HCT116 (cell line): ENCODE measurements at regions of chr1 and their contacts with region 1.

Region 1: GRCh38 chr1:84944767-84945486 is 51.9 kb upstream of the LPAR3 start:
- DNase-seq: peak; percentile 90
- ATAC-seq: peak; percentile 96
- H3K4me3 ChIP-seq: 0 out of 4 replicates have a peak overlapping the region, but pooled peaks of 1 of the 2 experiments have one; percentile 5
- H3K27ac ChIP-seq: peak overlapping the region; percentile 65; the same call in 1 of the 2 replicates
- H3K4me1 ChIP-seq: peaks cover 16 to 25% of the 10 kb centered on the region in 2 experiments
- H3K27me3 ChIP-seq: no peaks in the 10 kb centered on the region
- CTCF ChIP-seq: peak; percentile 70 to 99 (median 91)
- POLR2A ChIP-seq: no peak
- RAD21 ChIP-seq: peak; percentile 87

Region 2: DNA sequence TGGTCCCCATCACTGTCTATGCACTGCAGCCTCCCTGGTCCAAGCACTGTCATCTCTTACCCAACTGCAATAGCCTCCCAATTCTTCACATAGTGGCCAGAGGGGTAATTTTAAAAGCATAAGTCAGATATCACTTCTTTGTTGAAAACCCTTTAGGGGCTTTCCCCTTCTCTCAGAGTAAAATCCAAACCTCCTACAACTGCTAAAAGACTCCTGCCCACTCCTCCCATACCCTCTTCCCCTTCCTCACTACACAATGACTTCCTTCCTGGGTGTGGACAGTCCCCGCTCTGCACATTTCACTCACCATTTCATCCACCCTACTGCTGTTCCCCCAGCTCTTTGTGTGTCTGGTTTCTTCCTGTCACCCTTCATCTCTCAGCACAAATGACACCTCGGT is 43.7 kb after region 1 on chr1:
- CTCF ChIA-PET with region 1: no interaction called
- POLR2A ChIA-PET with region 1: no interaction called
- RAD21 ChIA-PET with region 1: no interaction called
- intact Hi-C with region 1: no loop called
- DNase-seq: no peak
- ATAC-seq: no peak
- H3K4me3 ChIP-seq: no peak overlapping the region
- H3K27ac ChIP-seq: no peak overlapping the region
- H3K4me1 ChIP-seq: no peaks in the 10 kb centered on the region
- H3K27me3 ChIP-seq: no peaks in the 10 kb centered on the region
- CTCF ChIP-seq: no peak
- POLR2A ChIP-seq: no peak
- RAD21 ChIP-seq: no peak

Region 3: GRCh38 chr1:85027242-85027983 is 82.5 kb after region 1 on chr1:
- CTCF ChIA-PET with region 1: interaction called, 29 read pairs
- POLR2A ChIA-PET with region 1: interaction called, 3 read pairs
- RAD21 ChIA-PET with region 1: interaction called, 3 to 5 read pairs
- intact Hi-C with region 1: loop called (anchors 1 kb)
- DNase-seq: no peak
- ATAC-seq: no peak
- H3K4me3 ChIP-seq: no peak overlapping the region
- H3K27ac ChIP-seq: no peak overlapping the region
- H3K4me1 ChIP-seq: no peaks in the 10 kb centered on the region
- H3K27me3 ChIP-seq: no peaks in the 10 kb centered on the region
- CTCF ChIP-seq: peak in 1 of 3 experiments; percentile 15; a peak in 1 of 6 replicates
- POLR2A ChIP-seq: no peak
- RAD21 ChIP-seq: peak; percentile 36

Region 4: GRCh38 chr1:85230305-85230980 is 285.5 kb after region 1 on chr1:
- CTCF ChIA-PET with region 1: interaction called, 29 read pairs
- POLR2A ChIA-PET with region 1: no interaction called
- RAD21 ChIA-PET with region 1: interaction called, 3 to 6 read pairs
- intact Hi-C with region 1: no loop called
- DNase-seq: peak; percentile 29
- ATAC-seq: peak; percentile 76
- H3K4me3 ChIP-seq: no peak overlapping the region
- H3K27ac ChIP-seq: no peak overlapping the region
- H3K4me1 ChIP-seq: peaks cover 18 to 19% of the 10 kb centered on the region in 2 experiments
- H3K27me3 ChIP-seq: no peaks in the 10 kb centered on the region
- CTCF ChIP-seq: peak; percentile 32 to 63 (median 55); a peak in 5 of 6 replicates
- POLR2A ChIP-seq: no peak
- RAD21 ChIP-seq: peak; percentile 43

Region 5: DNA sequence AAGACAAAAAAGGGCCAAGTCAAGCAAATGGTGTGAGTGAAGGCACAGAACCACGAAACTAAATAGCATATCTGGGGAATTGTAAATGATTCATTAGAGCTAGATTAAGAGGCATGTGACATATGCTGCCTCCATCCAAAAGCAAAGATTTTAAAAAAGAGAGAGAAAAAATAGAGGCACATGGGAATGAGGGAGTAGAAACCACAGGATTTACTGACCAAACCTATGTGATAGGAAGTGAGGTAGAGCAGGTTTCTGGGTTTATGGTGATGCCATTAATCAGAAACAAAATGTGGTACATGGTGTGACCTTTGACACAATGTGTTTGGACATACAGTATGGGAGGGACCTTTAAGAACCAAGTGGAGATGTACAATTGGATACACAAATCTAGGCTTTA is 301.0 kb after region 1 on chr1:
- CTCF ChIA-PET with region 1: interaction called, 48 read pairs
- POLR2A ChIA-PET with region 1: interaction called, 3 read pairs
- RAD21 ChIA-PET with region 1: interaction called, 13 to 17 read pairs
- intact Hi-C with region 1: no loop called
- DNase-seq: no peak
- ATAC-seq: no peak
- H3K4me3 ChIP-seq: no peak overlapping the region
- H3K27ac ChIP-seq: no peak overlapping the region
- H3K4me1 ChIP-seq: peaks cover 4 to 10% of the 10 kb centered on the region in 2 experiments; a peak in 3 of 4 replicates
- H3K27me3 ChIP-seq: no peaks in the 10 kb centered on the region
- CTCF ChIP-seq: no peak
- POLR2A ChIP-seq: no peak
- RAD21 ChIP-seq: no peak

Region 6: GRCh38 chr1:85276215-85276977 is 331.5 kb after region 1 on chr1 and contains the start of gene BCL10:
- CTCF ChIA-PET with region 1: interaction called, 10 read pairs
- POLR2A ChIA-PET with region 1: no interaction called
- RAD21 ChIA-PET with region 1: interaction called in 1 of 2 experiments, 4 read pairs
- intact Hi-C with region 1: no loop called
- DNase-seq: peak; percentile 96
- ATAC-seq: peak; percentile 98
- H3K4me3 ChIP-seq: peak within 1 kb of the TSS; percentile 67 to 70
- H3K27ac ChIP-seq: peak within 1 kb of the TSS; percentile 67
- H3K4me1 ChIP-seq: peaks cover 16 to 46% of the 10 kb centered on the region in 2 experiments
- H3K27me3 ChIP-seq: no peaks in the 10 kb centered on the region
- CTCF ChIP-seq: no peak
- POLR2A ChIP-seq: peak; percentile 39
- RAD21 ChIP-seq: no peak
- total RNA-seq, gene BCL10: 33.8 TPM